OCI-LY7 (cell line): ENCODE measurements at regions of chr6 and their contacts with region 1.

Region 1: GRCh38 chr6:107645800-107646575 is 156.1 kb downstream of the SOBP start:
- DNase-seq: no peak
- H3K4me3 ChIP-seq: no peak overlapping the region
- H3K27ac ChIP-seq: no peak overlapping the region
- H3K4me1 ChIP-seq: peaks cover 77% of the 10 kb centered on the region
- CTCF ChIP-seq: no peak

Region 2: GRCh38 chr6:107539409-107539808 is 106.6 kb before region 1 on chr6:
- CTCF ChIA-PET with region 1: no interaction called
- POLR2A ChIA-PET with region 1: interaction called, 7 read pairs
- intact Hi-C with region 1: loop called (anchors 5 kb)
- DNase-seq: no peak
- H3K4me3 ChIP-seq: no peak overlapping the region
- H3K27ac ChIP-seq: peak overlapping the region; percentile 98
- H3K4me1 ChIP-seq: peaks cover 62% of the 10 kb centered on the region
- CTCF ChIP-seq: no peak

Region 3: GRCh38 chr6:107624541-107624940 is 21.4 kb before region 1 on chr6:
- CTCF ChIA-PET with region 1: interaction called, 4 read pairs
- POLR2A ChIA-PET with region 1: interaction called, 87 read pairs
- intact Hi-C with region 1: no loop called
- DNase-seq: no peak
- H3K4me3 ChIP-seq: no peak overlapping the region
- H3K27ac ChIP-seq: no peak overlapping the region
- H3K4me1 ChIP-seq: peaks cover 71% of the 10 kb centered on the region
- CTCF ChIP-seq: no peak